MCF 10A (cell line): ENCODE measurements at regions of chr17 and their contacts with region 1.

Region 1: GRCh38 chr17:28763804-28764266 is 20.0 kb downstream of the TRAF4 start:
- DNase-seq: peak; percentile 83
- H3K4me3 Mint-ChIP-seq: no peak overlapping the region
- H3K27ac Mint-ChIP-seq: peak overlapping the region; percentile 16
- H3K4me1 Mint-ChIP-seq: peaks cover 10% of the 10 kb centered on the region
- H3K27me3 Mint-ChIP-seq: no peaks in the 10 kb centered on the region
- CTCF ChIP-seq: peak; percentile 70

Region 2: GRCh38 chr17:28750178-28751047 is 13.4 kb before region 1 on chr17:
- CTCF ChIA-PET with region 1: interaction called, 59 read pairs
- POLR2A ChIA-PET with region 1: interaction called, 10 read pairs
- intact Hi-C with region 1: no loop called
- DNase-seq: peak; percentile 94
- H3K4me3 Mint-ChIP-seq: no peak overlapping the region
- H3K27ac Mint-ChIP-seq: no peak overlapping the region
- H3K4me1 Mint-ChIP-seq: peaks cover 13% of the 10 kb centered on the region
- H3K27me3 Mint-ChIP-seq: no peaks in the 10 kb centered on the region
- CTCF ChIP-seq: peak; percentile 99

Region 3: DNA sequence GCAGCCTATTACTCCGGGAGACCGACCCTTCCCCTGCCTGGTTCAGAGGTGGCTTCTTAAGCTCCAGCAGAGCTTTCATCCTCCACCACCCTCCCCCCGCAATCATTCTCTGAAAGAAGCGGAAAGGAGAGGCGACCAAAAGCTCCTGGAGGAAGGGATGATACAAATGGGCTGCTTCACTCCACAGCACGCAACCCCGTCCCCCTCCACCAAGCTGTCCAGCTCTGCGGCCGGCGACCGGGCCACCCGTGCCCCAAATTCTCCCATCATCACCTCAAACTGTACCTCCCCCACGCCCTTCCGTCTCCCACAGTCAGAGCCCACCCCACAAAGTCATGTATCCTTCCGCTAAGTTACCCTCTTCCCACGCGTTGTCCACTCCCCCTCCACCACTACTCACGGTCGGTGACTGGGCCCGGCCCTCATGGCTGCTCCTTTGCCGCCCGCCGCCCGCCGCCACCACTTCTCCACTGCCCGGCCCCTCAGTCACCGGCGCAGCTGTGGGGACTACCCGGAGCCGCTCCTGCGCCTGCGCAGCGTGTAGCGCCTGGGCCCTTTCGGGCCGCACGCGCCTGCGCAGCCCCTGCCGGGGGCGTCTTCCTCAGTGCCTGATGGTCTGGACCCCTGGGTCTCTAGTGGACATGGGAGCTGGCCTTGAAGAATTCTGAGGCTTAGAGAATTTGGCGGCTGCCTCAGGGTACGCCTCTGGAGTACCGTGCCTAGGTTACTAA is 78.6 kb after region 1 on chr17 and contains the start of gene FAM222B:
- CTCF ChIA-PET with region 1: interaction called, 14 read pairs
- POLR2A ChIA-PET with region 1: interaction called, 18 read pairs
- intact Hi-C with region 1: loop called (anchors 5 kb)
- DNase-seq: peak; percentile 78
- H3K4me3 Mint-ChIP-seq: peak within 1 kb of the TSS; percentile 92
- H3K27ac Mint-ChIP-seq: peak within 1 kb of the TSS; percentile 50
- H3K4me1 Mint-ChIP-seq: peaks cover 5% of the 10 kb centered on the region
- H3K27me3 Mint-ChIP-seq: no peaks in the 10 kb centered on the region
- CTCF ChIP-seq: no peak
- total RNA-seq, gene FAM222B: 18.5 and 22.2 TPM in 2 replicates

Region 4: DNA sequence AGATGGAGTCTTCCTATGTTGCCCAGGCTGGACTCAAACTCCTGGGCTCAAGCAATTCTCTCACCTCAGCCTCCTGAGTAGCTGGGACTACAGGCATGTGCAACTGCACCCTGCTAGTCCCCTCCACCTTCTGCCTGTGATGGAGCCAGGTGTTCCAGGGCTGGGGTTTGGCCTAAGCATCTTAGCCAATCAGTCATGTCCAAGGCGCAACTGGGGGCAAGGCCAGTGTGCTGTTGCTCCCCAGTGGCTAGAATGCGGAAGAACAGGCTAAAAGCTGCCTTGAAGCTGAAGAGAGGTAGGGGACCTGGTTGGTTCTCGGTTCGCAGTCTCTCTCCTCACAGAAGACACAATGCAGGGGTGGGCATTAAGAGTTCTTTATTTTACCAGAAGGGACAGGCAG is 115.1 kb after region 1 on chr17:
- CTCF ChIA-PET with region 1: interaction called, 17 read pairs
- POLR2A ChIA-PET with region 1: interaction called, 4 read pairs
- intact Hi-C with region 1: no loop called
- DNase-seq: peak; percentile 66
- H3K4me3 Mint-ChIP-seq: no peak overlapping the region
- H3K27ac Mint-ChIP-seq: no peak overlapping the region
- H3K4me1 Mint-ChIP-seq: peaks cover 19% of the 10 kb centered on the region
- H3K27me3 Mint-ChIP-seq: no peaks in the 10 kb centered on the region
- CTCF ChIP-seq: peak; percentile 45

Region 5: GRCh38 chr17:28896884-28897768 is 133.3 kb after region 1 on chr17 and contains the start of gene FLOT2:
- CTCF ChIA-PET with region 1: interaction called, 43 read pairs
- POLR2A ChIA-PET with region 1: interaction called, 20 read pairs
- intact Hi-C with region 1: loop called (anchors 1 kb)
- DNase-seq: peak; percentile 96
- H3K4me3 Mint-ChIP-seq: peak within 1 kb of the TSS; percentile 90
- H3K27ac Mint-ChIP-seq: peak within 1 kb of the TSS; percentile 93
- H3K4me1 Mint-ChIP-seq: peaks cover 26% of the 10 kb centered on the region
- H3K27me3 Mint-ChIP-seq: no peaks in the 10 kb centered on the region
- CTCF ChIP-seq: peak; percentile 5
- total RNA-seq, gene FLOT2: 98.5 and 126 TPM in 2 replicates

Region 6: GRCh38 chr17:28908640-28909167 is 144.9 kb after region 1 on chr17:
- CTCF ChIA-PET with region 1: interaction called, 43 read pairs
- POLR2A ChIA-PET with region 1: interaction called, 4 read pairs
- intact Hi-C with region 1: no loop called
- DNase-seq: peak; percentile 68
- H3K4me3 Mint-ChIP-seq: no peak overlapping the region
- H3K27ac Mint-ChIP-seq: peak overlapping the region; percentile 75
- H3K4me1 Mint-ChIP-seq: peaks cover 17% of the 10 kb centered on the region
- H3K27me3 Mint-ChIP-seq: no peaks in the 10 kb centered on the region
- CTCF ChIP-seq: no peak